SK-N-SH (cell line): ENCODE measurements at regions of chr19 and their contacts with region 1.

Region 1: DNA sequence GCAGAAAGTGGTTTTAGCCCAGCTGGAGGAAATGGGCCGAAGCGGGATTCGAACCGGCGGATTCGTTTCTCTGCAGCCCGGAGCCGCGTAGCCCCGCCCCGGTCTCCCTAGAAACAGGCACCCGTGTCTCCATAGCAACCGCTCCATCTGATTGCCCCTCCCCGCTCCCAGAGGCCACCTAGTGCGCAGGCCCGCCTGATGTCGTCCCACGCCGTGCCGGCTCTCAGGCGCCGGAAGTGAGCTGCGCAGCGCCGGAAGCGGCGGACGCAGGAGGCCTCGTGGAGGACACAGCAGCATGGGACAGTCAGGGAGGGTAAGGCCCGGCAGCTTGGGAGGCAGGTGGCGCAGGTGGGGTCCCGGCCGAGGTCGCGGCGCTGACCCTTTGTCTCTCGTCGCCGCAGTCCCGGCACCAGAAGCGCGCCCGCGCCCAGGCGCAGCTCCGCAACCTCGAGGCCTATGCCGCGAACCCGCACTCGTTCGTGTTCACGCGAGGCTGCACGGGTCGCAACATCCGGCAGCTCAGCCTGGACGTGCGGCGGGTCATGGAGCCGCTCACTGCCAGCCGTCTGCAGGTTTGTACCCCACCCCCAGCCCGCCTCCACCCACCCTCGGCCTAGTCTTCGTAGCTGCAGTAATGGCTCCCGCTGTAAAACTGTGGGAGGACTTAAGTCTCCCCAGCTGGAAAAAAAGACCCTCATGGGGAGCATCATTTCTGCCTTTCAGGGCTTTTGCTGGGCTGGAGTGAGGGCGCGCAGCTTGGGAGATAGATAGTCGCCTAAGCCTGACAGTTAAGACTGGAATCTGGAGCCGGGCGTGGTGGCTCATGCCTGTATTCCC is at the start of gene PPAN:
- DNase-seq: peak; percentile 100
- H3K4me3 ChIP-seq: peak within 1 kb of the TSS; percentile 51 to 95
- H3K27ac ChIP-seq: peak within 1 kb of the TSS; percentile 59 to 87
- H3K4me1 ChIP-seq: peaks cover 0 to 24% of the 10 kb centered on the region in 2 experiments; a peak in 1 of 4 replicates
- H3K27me3 ChIP-seq: no peaks in the 10 kb centered on the region
- CTCF ChIP-seq: no peak
- EP300 ChIP-seq: no peak
- RAD21 ChIP-seq: no peak
- polyA plus RNA-seq, gene PPAN: 62.5 and 75.6 TPM in 2 replicates

Region 2: DNA sequence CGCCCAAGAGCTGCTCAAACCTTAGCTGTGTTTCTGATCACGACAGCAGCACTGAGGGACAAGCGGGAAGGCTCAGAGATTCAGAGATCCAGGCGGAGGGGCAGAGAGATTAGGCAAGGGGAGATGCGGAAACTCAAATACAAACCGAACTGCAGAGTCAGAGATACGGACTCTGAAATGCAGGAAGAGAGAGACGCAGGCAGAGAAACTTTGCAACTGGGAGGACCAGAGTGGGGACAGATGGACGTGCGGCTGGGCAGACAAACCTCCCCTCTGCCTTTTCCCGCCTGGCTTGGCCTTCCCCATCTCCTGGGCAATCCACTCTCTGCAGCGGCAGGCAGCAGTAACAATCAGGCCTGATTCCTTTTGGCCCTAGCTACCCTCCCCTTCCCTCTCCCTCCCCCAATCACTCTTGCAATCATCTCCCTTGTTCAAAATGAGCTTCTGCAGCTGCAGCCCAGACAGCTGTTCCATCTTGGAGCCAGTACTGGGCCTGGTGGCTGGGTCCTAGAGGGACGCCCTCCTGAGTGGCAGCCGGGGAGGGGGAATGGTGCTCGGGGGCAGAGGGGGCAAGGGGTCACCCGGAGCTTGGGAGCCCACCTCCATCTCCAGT is 199.7 kb before region 1 on chr19:
- CTCF ChIA-PET with region 1: no interaction called
- POLR2A ChIA-PET with region 1: no interaction called
- DNase-seq: peak; percentile 31
- H3K4me3 ChIP-seq: no peak overlapping the region
- H3K27ac ChIP-seq: no peak overlapping the region
- H3K4me1 ChIP-seq: no peaks in the 10 kb centered on the region
- H3K27me3 ChIP-seq: no peaks in the 10 kb centered on the region
- CTCF ChIP-seq: no peak
- EP300 ChIP-seq: no peak
- RAD21 ChIP-seq: no peak

Region 3: GRCh38 chr19:10120538-10121189 is 14.3 kb after region 1 on chr19:
- CTCF ChIA-PET with region 1: interaction called, 58 read pairs
- POLR2A ChIA-PET with region 1: interaction called, 35 read pairs
- DNase-seq: no peak
- H3K4me3 ChIP-seq: no peak overlapping the region
- H3K27ac ChIP-seq: peak overlapping the region in 1 of 2 experiments; percentile 76; a peak in 3 of 4 replicates
- H3K4me1 ChIP-seq: peaks cover 3 to 13% of the 10 kb centered on the region in 2 experiments; a peak in 1 of 4 replicates
- H3K27me3 ChIP-seq: no peaks in the 10 kb centered on the region
- CTCF ChIP-seq: no peak
- EP300 ChIP-seq: no peak
- RAD21 ChIP-seq: no peak

Region 4: DNA sequence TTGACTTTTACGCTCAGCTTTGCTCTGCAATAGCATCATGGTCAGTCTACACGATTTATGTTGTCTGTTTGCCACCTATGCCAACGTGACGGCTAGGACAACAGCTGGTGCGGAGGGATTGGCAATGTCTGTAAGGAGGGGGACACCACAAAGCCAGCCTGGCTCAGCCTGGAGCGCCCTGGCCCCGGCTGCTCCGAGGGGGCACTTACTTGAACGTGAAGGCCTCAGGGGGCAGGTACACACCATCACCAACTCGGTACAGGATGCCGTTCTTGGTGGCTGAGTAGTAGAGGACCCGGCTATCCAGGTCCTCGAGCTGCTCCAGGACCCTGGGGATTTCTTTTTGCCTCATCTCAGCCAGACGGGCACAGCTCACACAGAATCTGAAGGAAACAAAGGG is 39.8 kb after region 1 on chr19:
- CTCF ChIA-PET with region 1: no interaction called
- POLR2A ChIA-PET with region 1: no interaction called
- DNase-seq: no peak
- H3K4me3 ChIP-seq: no peak overlapping the region
- H3K27ac ChIP-seq: no peak overlapping the region
- H3K4me1 ChIP-seq: peaks cover 0 to 8% of the 10 kb centered on the region in 2 experiments; a peak in 1 of 4 replicates
- H3K27me3 ChIP-seq: no peaks in the 10 kb centered on the region
- CTCF ChIP-seq: no peak
- EP300 ChIP-seq: no peak
- RAD21 ChIP-seq: no peak